ENCODE measurements at regions of chr5 and their contacts with region 1.

Region 1: DNA sequence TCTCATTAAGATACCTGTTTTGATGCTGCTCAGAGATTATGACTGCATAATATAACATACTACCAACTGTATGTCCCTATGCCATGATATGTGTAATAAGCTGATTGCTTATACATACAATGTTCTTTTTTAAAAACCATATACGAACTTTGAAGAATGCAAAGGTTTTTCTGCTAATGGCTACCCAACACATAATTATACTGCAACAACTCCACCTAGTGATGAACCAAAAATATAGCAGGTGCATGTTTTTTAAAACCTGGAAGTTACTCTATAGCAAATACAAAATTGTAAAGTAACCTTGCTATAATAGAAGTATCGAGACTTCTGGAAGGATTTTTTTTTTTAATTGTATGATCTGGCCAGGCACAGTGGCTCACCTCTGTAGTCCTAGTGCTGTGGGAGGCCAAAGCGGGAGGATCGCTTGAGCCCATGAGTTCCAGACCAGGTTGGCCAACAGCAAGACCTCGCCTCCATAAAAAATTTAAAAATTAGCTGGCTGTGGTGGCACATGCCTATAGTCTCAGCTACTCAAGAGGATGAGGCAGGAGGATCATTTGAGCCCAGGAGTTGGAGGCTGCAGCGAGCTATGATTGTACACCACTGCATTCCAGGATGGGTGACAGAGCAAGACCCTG is 49.1 kb downstream of the HOMER1 start:
- DNase-seq: no peak
- H3K4me3 ChIP-seq: no peak overlapping the region
- H3K27ac ChIP-seq: no peak overlapping the region
- H3K4me1 ChIP-seq: no peaks in the 10 kb centered on the region
- H3K27me3 ChIP-seq: no peaks in the 10 kb centered on the region
- CTCF ChIP-seq: peak; percentile 43 to 71 (median 54)
- POLR2A ChIP-seq: no peak

Region 2: DNA sequence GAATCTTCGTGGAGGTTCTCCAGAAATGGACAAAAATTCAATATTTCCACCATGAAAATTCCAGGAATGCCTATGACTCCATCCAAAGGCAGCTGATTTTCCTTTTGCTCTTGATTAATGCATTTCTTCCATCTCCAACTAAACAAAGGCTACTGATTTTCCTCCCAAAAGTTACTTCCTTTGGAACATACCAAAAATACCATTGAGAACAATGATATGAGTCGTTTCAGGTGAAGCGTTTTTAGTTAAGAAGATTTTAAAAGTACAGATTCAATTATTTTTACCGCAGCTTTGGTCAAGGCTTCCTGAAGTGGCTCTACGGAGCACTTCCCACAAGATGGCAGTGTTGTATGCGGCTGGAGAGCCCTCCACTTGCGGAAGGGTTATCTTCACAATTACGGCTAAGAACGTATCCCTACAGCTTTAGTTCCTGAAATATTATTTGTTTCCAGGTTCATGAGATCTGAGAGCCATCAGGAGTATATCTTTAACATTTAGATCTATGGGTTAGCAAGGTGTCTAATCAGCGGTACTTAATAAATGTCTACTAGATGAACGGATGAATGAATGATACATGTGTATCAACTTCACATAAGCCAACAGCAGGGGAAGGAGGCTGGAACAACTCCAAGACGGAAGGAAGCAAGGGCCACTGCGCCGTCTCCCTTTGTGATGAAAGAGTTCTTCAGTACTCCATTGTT is 443.8 kb before region 1 on chr5:
- intact Hi-C with region 1: loop called (anchors 5 kb)
- DNase-seq: peak; percentile 32
- H3K4me3 ChIP-seq: no peak overlapping the region
- H3K27ac ChIP-seq: no peak overlapping the region
- H3K4me1 ChIP-seq: no peaks in the 10 kb centered on the region
- H3K27me3 ChIP-seq: no peaks in the 10 kb centered on the region
- CTCF ChIP-seq: peak; percentile 29 to 70 (median 64)
- POLR2A ChIP-seq: no peak

Region 3: GRCh38 chr5:79133657-79134451 is 331.0 kb before region 1 on chr5:
- intact Hi-C with region 1: loop called (anchors 2 kb)
- DNase-seq: peak; percentile 49
- H3K4me3 ChIP-seq: peak overlapping the region in 1 of 2 donors; percentile 23
- H3K27ac ChIP-seq: peak overlapping the region; percentile 55
- H3K4me1 ChIP-seq: no peaks in the 10 kb centered on the region
- H3K27me3 ChIP-seq: no peaks in the 10 kb centered on the region
- CTCF ChIP-seq: peak; percentile 44 to 76 (median 68)
- POLR2A ChIP-seq: no peak

Region 4: DNA sequence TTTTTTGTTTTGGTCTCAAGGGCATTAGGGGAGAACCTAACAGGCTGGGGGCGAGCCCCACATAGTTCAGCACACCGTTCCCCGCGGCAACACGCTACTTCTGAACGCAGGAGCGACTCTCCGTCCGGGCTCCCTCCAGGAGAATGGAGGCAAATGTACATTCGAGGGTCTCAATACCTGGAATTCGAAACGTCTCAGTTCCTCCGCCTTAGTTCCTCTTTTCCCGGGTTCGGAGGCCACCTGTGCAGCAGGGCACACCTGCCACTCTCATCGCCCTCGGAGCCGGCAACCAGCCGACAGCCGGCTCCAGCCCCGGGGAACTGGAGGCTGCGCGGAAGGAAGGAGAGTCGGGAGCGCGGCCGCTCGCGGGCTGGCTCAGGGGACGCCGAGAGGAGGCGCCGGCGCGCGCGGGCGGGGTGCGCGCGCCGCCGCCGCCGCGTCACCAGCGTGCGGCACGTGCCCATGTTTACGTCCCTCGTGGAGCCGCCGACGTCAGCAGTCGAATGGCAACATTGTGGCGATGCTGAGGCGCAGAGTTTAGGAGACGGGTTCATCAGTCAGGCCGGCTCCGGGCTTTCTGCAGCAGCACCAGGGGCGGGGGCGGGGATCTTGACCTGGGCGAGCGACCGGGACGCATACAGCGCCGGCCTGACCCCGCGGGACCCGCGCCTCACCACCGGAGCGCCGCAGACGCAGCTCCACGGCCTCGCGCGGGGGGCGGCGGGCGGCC is 229.0 kb before region 1 on chr5 and contains the start of gene JMY:
- intact Hi-C with region 1: loop called (anchors 10 kb)
- DNase-seq: peak; percentile 88
- H3K4me3 ChIP-seq: peak within 1 kb of the TSS; percentile 84 to 94
- H3K27ac ChIP-seq: peak within 1 kb of the TSS; percentile 98
- H3K4me1 ChIP-seq: peaks cover 4% of the 10 kb centered on the region
- H3K27me3 ChIP-seq: no peaks in the 10 kb centered on the region
- CTCF ChIP-seq: peak in 1 of 4 experiments; percentile 26
- POLR2A ChIP-seq: peak; percentile 91
- total RNA-seq, gene JMY: 19.8 to 25.7 TPM

Region 5: DNA sequence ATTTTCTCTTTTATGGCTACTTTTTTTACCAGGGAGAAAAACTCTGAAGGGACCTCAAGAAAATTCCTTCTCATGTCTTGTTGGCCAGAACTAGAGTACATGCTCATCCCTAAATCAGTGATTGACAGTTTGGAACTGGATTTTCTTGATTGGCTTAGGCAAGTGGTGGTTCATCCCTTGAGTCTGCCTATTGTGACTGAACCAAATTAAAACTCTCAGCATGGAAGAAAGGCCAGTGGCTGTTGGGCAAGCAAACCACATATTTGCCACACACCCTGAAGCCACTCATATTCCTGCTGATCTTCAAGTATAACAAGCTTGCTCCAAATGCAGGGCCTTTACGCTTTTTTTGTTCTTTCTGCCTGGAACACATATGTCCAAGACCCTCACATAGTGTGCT is 56.3 kb after region 1 on chr5:
- intact Hi-C with region 1: no loop called
- DNase-seq: no peak
- H3K4me3 ChIP-seq: no peak overlapping the region
- H3K27ac ChIP-seq: no peak overlapping the region
- H3K4me1 ChIP-seq: no peaks in the 10 kb centered on the region
- H3K27me3 ChIP-seq: no peaks in the 10 kb centered on the region
- CTCF ChIP-seq: no peak
- POLR2A ChIP-seq: no peak

Measured in prostate gland (tissue), 2 donors.